Heart right ventricle (tissue), 16 donors: ENCODE measurements at regions of chr5 and their contacts with region 1.

Region 1: GRCh38 chr5:135560858-135561257 is 17.9 kb downstream of the CXCL14 start:
- DNase-seq: peak; percentile 62 to 73
- ATAC-seq: peak; percentile 73 to 93 (median 86)
- H3K4me3 ChIP-seq: no peak overlapping the region
- H3K27ac ChIP-seq: no peak overlapping the region
- H3K4me1 ChIP-seq: peaks cover 0 to 7% (median 0%) of the 10 kb centered on the region in 9 donors
- H3K27me3 ChIP-seq: peaks cover 0 to 57% (median 44%) of the 10 kb centered on the region in 7 donors
- CTCF ChIP-seq: peak; percentile 46 to 82 (median 79)

Region 2: DNA sequence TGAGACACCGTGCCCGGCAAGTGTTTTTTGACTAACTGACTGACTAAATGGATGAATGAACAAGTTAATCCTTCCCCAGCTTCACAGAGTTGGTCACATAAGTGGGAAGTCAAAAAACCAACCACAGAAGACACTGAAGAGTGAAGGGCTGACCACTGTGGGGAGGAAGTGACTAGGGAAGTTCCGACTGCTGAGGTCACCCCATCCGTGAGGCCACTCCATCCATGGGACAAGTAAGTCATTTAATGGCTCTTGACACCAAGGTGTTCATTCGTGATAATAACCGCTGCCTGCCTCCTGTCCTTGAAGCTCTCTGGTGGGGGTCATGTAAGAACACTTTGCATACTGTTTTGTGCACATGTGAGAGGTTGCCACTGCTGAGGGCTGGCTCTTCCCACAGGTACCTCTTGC is 40.1 kb after region 1 on chr5:
- intact Hi-C with region 1: no loop called
- DNase-seq: no peak
- ATAC-seq: no peak
- H3K4me3 ChIP-seq: no peak overlapping the region
- H3K27ac ChIP-seq: no peak overlapping the region
- H3K4me1 ChIP-seq: no peaks in the 10 kb centered on the region
- H3K27me3 ChIP-seq: peaks cover 0 to 25% (median 4%) of the 10 kb centered on the region in 7 donors
- CTCF ChIP-seq: no peak

Region 3: DNA sequence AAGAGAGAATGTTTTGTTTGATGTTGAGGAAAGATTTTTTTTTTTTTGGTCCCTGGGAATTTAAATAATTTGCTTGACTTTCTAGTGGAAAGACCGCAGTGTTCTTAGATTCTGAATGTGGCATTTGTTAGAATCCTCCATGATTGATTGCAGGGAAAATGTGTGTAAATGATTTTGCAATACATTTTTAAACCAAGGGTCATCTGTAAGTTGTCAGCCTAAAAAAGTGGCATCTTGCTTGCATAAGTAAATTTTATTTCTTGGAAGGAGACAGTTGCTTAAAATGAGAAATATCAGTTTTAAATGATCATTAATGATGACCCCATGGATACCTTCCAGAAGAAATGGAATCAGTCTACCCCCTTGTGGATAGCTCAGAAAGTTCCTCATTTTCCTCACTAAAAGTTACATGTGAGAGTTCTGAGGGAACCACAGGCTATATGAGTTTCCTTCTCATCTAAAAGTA is 168.5 kb after region 1 on chr5:
- intact Hi-C with region 1: loop called in 1 of 10 experiments (anchors 10 kb)
- DNase-seq: no peak
- ATAC-seq: no peak
- H3K4me3 ChIP-seq: no peak overlapping the region
- H3K27ac ChIP-seq: no peak overlapping the region
- H3K4me1 ChIP-seq: peaks cover 0 to 6% (median 0%) of the 10 kb centered on the region in 9 donors
- H3K27me3 ChIP-seq: no peaks in the 10 kb centered on the region
- CTCF ChIP-seq: peak in 4 of 9 donors; percentile 8 to 28 (median 17)

Region 4: GRCh38 chr5:135829681-135830383 is 269.0 kb after region 1 on chr5:
- intact Hi-C with region 1: loop called (anchors 1 to 5 kb)
- DNase-seq: peak; percentile 36 to 66
- ATAC-seq: peak; percentile 22 to 66 (median 54)
- H3K4me3 ChIP-seq: no peak overlapping the region
- H3K27ac ChIP-seq: no peak overlapping the region
- H3K4me1 ChIP-seq: peaks cover 0 to 9% (median 7%) of the 10 kb centered on the region in 9 donors
- H3K27me3 ChIP-seq: peaks cover 5 to 49% (median 40%) of the 10 kb centered on the region in 7 donors
- CTCF ChIP-seq: peak; percentile 58 to 82 (median 77)

Region 5: GRCh38 chr5:136212252-136212721 is 651.4 kb after region 1 on chr5:
- intact Hi-C with region 1: loop called in 2 of 10 experiments (anchors 10 kb)
- DNase-seq: peak; percentile 32 to 64
- ATAC-seq: peak in 5 of 8 donors; percentile 46 to 65 (median 54)
- H3K4me3 ChIP-seq: no peak overlapping the region
- H3K27ac ChIP-seq: no peak overlapping the region
- H3K4me1 ChIP-seq: no peaks in the 10 kb centered on the region
- H3K27me3 ChIP-seq: peaks cover 0 to 45% (median 27%) of the 10 kb centered on the region in 7 donors
- CTCF ChIP-seq: peak; percentile 58 to 95 (median 90)